Gastrocnemius medialis (tissue), 4 donors: ENCODE measurements at regions of chr6 and their contacts with region 1.

Region 1: GRCh38 chr6:11241793-11242201 is 9.3 kb upstream of the NEDD9 start:
- DNase-seq: peak in 1 of 2 donors; percentile 35
- ATAC-seq: no peak
- H3K4me3 ChIP-seq: no peak overlapping the region
- H3K27ac ChIP-seq: no peak overlapping the region
- H3K4me1 ChIP-seq: no peaks in the 10 kb centered on the region
- H3K27me3 ChIP-seq: no peaks in the 10 kb centered on the region
- CTCF ChIP-seq: peak; percentile 31 to 61 (median 34)
- POLR2A ChIP-seq: no peak

Region 2: GRCh38 chr6:11172501-11173332 is 69.1 kb before region 1 on chr6:
- in situ Hi-C with region 1: no loop called
- intact Hi-C with region 1: loop called (anchors 2 kb)
- DNase-seq: peak in 1 of 2 donors; percentile 11
- ATAC-seq: peak in 1 of 2 donors; percentile 50
- H3K4me3 ChIP-seq: no peak overlapping the region
- H3K27ac ChIP-seq: no peak overlapping the region
- H3K4me1 ChIP-seq: peaks cover 0 to 5% of the 10 kb centered on the region in 2 donors
- H3K27me3 ChIP-seq: no peaks in the 10 kb centered on the region
- CTCF ChIP-seq: peak; percentile 63 to 85 (median 76)
- POLR2A ChIP-seq: no peak

Region 3: DNA sequence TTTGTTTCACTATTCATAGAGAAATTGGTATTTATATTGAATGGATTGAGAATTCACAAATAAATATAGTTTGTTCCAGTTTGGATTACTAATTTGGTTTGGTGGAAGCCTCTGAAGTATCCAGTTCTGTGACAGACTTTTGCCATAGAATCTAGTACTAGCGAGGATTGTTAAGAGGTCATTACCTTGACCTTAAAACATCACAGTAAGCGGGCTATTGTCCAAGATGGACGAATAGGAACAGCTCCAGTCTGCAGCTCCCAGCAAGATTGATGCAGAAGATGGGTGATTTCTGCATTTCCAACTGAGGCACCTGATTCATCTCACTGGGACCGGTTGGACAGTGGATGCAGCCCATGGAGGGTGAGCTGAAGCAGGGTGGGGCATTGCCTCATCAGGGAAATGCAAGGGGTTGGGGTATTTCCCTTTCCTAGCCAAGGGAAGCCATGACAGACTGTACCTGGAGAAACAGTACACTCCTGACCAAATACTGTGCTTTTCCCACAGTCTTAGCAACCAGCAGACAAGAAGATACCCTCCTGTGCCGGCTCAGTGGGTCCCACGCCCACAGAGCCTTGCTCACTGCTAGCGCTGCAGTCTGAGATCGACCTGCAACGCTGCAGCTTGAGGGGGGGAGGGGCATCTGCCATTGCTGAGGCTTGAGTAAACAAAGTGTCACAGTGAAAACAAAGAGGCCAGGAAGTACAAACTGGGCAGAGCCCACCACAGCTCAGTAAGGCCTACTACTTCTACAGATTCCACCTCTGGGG is 57.0 kb after region 1 on chr6:
- in situ Hi-C with region 1: no loop called
- intact Hi-C with region 1: no loop called
- DNase-seq: no peak
- ATAC-seq: no peak
- H3K4me3 ChIP-seq: no peak overlapping the region
- H3K27ac ChIP-seq: no peak overlapping the region
- H3K4me1 ChIP-seq: no peaks in the 10 kb centered on the region
- H3K27me3 ChIP-seq: no peaks in the 10 kb centered on the region
- CTCF ChIP-seq: no peak
- POLR2A ChIP-seq: no peak

Region 4: GRCh38 chr6:13112921-13113320 is 1871.1 kb after region 1 on chr6:
- in situ Hi-C with region 1: no loop called
- intact Hi-C with region 1: no loop called
- DNase-seq: no peak
- ATAC-seq: no peak
- H3K4me3 ChIP-seq: no peak overlapping the region
- H3K27ac ChIP-seq: no peak overlapping the region
- H3K4me1 ChIP-seq: no peaks in the 10 kb centered on the region
- H3K27me3 ChIP-seq: no peaks in the 10 kb centered on the region
- CTCF ChIP-seq: no peak
- POLR2A ChIP-seq: no peak